Sciatic nerve (tissue), 2 donors: ENCODE measurements at regions of chr4 and their contacts with region 1.

Region 1: DNA sequence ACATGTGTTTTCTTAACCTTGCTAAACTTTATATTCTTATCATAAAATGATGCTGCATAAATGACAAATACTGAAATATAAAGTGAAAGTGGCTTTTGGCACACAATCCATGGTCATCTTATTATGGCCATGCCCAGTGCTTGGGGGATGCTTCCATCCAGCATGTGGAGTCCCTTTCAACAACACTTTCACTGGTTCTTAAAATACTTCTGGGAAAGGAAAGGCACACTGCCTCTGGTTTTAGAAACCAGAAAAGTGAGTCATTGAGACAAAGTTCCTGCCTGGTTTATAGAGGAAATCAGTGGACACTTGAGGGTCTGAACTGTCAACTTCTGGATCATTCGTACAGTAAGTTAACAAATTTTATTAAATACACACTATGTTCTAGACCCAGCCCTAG is 248.0 kb upstream of the ADAMTS3 start:
- DNase-seq: no peak
- ATAC-seq: no peak

Region 2: DNA sequence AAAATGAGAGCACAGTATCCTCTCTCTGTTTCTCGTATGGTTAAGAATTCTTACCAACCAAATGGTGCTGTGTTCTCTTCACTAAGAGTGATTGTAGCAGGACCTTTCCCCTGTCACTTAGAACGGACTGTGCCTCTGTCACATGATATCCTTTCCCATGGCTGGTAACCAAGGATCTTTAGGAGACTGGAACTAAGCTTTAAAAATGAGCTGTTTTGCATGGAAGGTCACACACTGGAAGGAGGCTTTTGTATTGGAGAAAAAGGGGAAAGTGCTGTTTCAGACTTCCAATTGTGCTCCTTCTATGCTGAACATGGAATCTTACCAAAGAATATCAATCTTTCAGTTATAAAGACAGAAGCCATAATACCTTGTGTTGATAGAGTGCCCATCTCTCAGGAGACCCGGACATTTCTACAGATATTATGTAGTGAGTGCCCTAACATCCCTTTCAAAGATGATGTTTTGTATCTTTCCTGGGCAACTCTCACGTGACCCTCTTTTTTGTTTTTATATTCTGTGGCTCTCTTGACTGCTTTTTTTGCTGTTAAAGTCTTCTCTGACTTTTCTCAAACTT is 1329.6 kb before region 1 on chr4:
- intact Hi-C with region 1: loop called (anchors 5 kb)
- DNase-seq: no peak
- ATAC-seq: peak; percentile 42